K562 (cell line): ENCODE measurements at regions of chr10 and their contacts with region 1.

Region 1: GRCh38 chr10:72273410-72274212 is at the start of gene DDIT4:
- DNase-seq: peak; percentile 99 to 100 (median 100)
- ATAC-seq: peak; percentile 72
- H3K4me3 ChIP-seq: peak within 1 kb of the TSS; percentile 86
- H3K27ac ChIP-seq: peak within 1 kb of the TSS; percentile 91
- H3K4me1 ChIP-seq: peaks cover 34 to 44% of the 10 kb centered on the region in 2 experiments
- H3K27me3 ChIP-seq: no peaks in the 10 kb centered on the region
- CTCF ChIP-seq: no peak; a peak in 1 of 6 replicates
- EP300 ChIP-seq: peak; percentile 34
- POLR2A ChIP-seq: peak; percentile 99
- RAD21 ChIP-seq: peak; percentile 15 to 46
- polyA plus RNA-seq, gene DDIT4: 8.2 to 12.3 TPM

Region 2: GRCh38 chr10:72215652-72216549 is 57.7 kb before region 1 on chr10 and contains the starts of genes ANAPC16 and ASCC1:
- CTCF ChIA-PET with region 1: no interaction called
- POLR2A ChIA-PET with region 1: interaction called, 70 read pairs
- in situ Hi-C with region 1: no loop called
- intact Hi-C with region 1: loop called (anchors 2 kb)
- DNase-seq: peak; percentile 93 to 98 (median 97)
- ATAC-seq: peak; percentile 90
- H3K4me3 ChIP-seq: peak within 1 kb of the TSS; percentile 65
- H3K27ac ChIP-seq: peak within 1 kb of the TSS; percentile 99
- H3K4me1 ChIP-seq: peaks cover 13 to 19% of the 10 kb centered on the region in 2 experiments; a peak in 4 of 5 replicates
- H3K27me3 ChIP-seq: no peaks in the 10 kb centered on the region
- CTCF ChIP-seq: 0 out of 6 replicates have a peak, but pooled peaks of 1 of the 3 experiments have one; percentile 1
- EP300 ChIP-seq: peak; percentile 22; the same call in 1 of the 2 replicates
- POLR2A ChIP-seq: peak; percentile 100
- RAD21 ChIP-seq: peak; percentile 10 to 34; a peak in 1 of 4 replicates
- polyA plus RNA-seq, gene ANAPC16: 184 to 208 TPM
- polyA plus RNA-seq, gene ASCC1: 50.8 to 73.3 TPM

Region 3: DNA sequence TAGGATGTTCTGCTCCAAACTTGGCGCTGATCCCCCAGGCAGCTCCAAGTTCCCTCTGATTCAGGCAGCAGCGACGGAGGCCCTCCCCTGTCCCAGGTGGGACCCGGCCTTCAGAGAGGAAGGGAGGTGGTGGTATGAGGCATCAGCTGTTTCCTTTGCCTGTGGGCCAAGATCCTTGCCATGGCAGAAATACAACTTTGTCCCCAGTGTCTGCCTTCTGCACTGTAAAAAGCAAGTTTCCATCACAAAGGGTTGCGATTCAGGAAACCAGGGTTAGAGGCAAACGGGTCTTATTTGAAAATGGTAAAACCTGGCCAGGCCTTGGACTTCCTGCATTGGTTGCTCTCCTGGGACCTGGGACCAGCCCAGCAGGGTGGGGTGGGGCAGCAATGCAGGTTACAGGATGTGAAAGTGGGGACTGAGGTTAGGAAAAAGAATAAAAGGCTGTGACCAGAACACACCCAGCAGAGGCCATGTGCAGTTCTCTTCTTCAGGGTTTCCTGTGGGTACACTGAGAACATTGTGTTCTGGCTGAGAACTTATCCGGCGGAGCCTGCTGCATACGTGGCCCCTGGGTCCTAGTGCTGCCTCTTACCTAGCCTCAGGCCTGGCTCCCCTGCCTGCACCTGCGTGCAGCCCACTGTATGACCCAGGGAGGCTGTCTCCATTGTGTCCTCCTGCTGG is 25.0 kb before region 1 on chr10:
- CTCF ChIA-PET with region 1: no interaction called
- POLR2A ChIA-PET with region 1: interaction called, 277 read pairs
- in situ Hi-C with region 1: no loop called
- intact Hi-C with region 1: loop called (anchors 1 kb)
- DNase-seq: no peak
- ATAC-seq: peak; percentile 51
- H3K4me3 ChIP-seq: no peak overlapping the region
- H3K27ac ChIP-seq: no peak overlapping the region
- H3K4me1 ChIP-seq: peaks cover 34 to 50% of the 10 kb centered on the region in 2 experiments
- H3K27me3 ChIP-seq: no peaks in the 10 kb centered on the region
- CTCF ChIP-seq: no peak
- EP300 ChIP-seq: no peak
- POLR2A ChIP-seq: no peak
- RAD21 ChIP-seq: no peak

Region 4: DNA sequence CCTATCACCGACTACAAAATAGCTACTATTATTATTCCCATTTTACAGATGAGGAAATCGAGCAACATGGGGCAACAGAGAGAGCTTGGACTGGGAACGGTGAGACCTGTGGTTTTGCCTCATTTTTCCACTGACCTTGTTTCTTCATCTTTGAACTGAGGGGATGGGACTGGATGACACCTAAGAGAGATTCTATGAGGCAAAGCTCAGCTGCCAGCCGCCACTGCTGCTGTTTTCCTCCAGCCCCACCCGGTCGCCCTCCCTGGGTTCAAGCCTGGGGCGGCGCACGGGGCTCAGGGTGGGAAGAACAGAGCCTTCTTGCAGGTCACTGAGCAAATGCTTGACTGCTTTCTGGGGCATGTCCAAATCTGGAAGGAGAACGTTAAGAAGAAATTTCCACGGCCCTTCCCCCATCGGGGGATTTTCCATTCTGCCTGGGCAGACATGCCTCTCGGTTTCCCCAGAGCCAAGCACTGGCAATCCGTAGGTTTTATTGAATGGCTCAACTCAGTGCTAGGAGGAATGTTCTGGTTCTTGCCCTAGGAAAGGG is 12.4 kb after region 1 on chr10:
- CTCF ChIA-PET with region 1: no interaction called
- POLR2A ChIA-PET with region 1: interaction called, 155 read pairs
- in situ Hi-C with region 1: no loop called
- intact Hi-C with region 1: no loop called
- DNase-seq: peak in 2 of 4 experiments; percentile 6 to 14
- ATAC-seq: no peak; the same call in 1 of the 3 replicates
- H3K4me3 ChIP-seq: no peak overlapping the region
- H3K27ac ChIP-seq: no peak overlapping the region
- H3K4me1 ChIP-seq: peaks cover 12 to 24% of the 10 kb centered on the region in 2 experiments
- H3K27me3 ChIP-seq: no peaks in the 10 kb centered on the region
- CTCF ChIP-seq: no peak
- EP300 ChIP-seq: no peak
- POLR2A ChIP-seq: no peak
- RAD21 ChIP-seq: no peak

Region 5: DNA sequence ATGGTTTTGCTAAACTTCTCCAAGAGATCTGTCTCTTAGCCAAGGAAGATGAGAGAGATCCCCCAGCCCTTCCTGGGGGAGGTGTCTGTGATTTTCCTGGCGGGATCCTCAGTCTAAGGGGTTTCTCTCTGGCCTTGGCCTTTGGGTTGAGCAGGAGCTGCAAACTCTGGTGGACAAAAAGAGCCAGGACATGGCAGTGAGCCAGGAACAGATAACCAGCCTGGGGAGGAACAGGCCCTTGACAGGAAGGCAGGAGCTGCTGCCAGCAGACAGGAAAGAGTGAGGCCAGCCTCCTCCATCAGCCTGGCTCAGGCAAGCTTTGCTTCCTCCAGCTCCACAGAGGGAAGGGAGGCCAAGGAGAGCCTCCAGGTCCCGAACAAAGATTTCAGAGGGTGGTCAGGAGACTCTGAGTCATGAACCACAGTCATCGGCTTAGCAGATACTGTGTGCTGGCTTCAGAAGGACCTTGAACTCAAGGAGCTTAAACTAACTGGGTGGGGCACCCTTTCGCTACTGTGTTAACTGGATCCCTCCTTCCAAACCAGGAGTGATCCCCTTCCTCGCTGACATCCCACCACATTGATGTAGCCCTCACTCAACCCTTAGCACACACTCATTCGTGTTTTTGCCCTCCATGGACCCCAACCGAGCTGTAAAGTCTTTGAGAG is 34.8 kb after region 1 on chr10:
- CTCF ChIA-PET with region 1: no interaction called
- POLR2A ChIA-PET with region 1: interaction called, 113 read pairs
- in situ Hi-C with region 1: no loop called
- intact Hi-C with region 1: no loop called
- DNase-seq: peak; percentile 72 to 96 (median 79)
- ATAC-seq: peak; percentile 82
- H3K4me3 ChIP-seq: no peak overlapping the region
- H3K27ac ChIP-seq: peak overlapping the region; percentile 87
- H3K4me1 ChIP-seq: peaks cover 45 to 57% of the 10 kb centered on the region in 2 experiments
- H3K27me3 ChIP-seq: no peaks in the 10 kb centered on the region
- CTCF ChIP-seq: peak in 2 of 3 experiments; percentile 9 to 14; a peak in 2 of 6 replicates
- EP300 ChIP-seq: peak; percentile 78
- POLR2A ChIP-seq: peak; percentile 74
- RAD21 ChIP-seq: peak; percentile 33 to 50

Region 6: DNA sequence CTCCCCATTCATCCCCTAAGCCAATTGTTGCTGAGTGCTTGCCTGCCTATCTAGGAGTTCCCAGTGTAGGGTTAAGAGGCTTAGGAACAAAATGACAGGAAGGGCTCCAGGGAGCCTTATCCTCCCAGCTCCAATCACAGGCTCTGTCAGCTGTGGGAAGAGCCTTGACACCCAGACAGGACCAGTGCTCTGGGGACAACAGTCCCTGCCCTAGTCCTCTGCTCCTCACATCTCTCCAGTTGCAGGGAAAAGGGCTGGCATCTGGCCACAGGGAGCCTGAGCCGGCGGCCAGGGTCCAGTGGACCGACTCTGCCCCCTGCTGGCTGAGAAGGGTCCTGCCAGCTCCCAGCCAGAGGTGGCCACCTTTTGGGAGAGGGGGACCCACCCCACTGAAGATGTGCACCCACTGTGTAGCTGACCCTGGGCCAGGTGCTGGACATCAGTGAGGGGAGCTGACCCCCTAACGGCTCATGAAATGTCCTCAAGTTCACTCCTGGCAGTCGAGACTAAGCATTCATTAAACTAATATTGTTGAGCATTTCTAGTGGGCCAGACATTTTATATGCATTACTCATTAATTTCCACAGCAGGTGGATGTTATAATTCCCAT is 63.5 kb after region 1 on chr10:
- CTCF ChIA-PET with region 1: interaction called, 12 read pairs
- POLR2A ChIA-PET with region 1: interaction called, 197 read pairs
- in situ Hi-C with region 1: no loop called
- intact Hi-C with region 1: no loop called
- DNase-seq: peak; percentile 76 to 88 (median 81)
- ATAC-seq: peak; percentile 81
- H3K4me3 ChIP-seq: no peak overlapping the region
- H3K27ac ChIP-seq: no peak overlapping the region
- H3K4me1 ChIP-seq: peaks cover 2 to 36% of the 10 kb centered on the region in 2 experiments; a peak in 2 of 5 replicates
- H3K27me3 ChIP-seq: no peaks in the 10 kb centered on the region
- CTCF ChIP-seq: peak; percentile 91 to 99 (median 93)
- EP300 ChIP-seq: no peak
- POLR2A ChIP-seq: peak; percentile 29; the same call in 1 of the 2 replicates
- RAD21 ChIP-seq: peak; percentile 95 to 97

Region 7: DNA sequence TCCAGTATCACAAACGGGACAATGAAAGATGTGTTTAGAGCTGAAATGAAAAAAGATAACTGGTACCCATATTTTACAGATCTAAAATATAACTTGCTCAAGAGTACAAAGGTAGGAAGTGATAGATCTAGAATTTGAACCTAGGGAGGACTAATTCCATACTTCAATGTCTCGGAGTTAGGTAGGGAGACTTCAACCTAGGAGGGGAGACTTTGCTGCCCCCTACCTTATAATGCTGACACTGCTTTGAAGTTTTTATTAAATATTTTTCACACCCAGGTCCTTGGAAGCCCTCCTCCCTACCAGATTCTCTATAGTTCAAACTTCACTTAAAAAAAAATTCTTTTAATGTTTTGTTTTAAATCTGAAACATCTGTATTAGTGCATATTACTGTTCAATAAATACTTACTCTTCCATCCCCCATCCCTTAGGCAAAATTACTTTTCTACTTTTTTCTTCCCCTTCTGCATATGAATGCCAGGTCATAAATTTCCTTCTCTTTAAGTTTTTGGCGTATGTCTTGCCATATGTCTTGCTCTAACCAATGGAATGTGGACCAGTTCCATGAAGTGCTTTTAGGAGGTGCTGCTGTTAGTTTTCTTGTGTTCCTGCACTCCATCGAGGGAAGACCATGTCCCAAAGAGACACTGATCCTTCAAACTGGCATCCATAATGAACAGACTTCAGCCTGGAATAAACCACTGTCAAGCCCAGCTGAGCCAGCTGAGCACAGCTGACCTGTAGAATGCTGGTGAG is 294.5 kb after region 1 on chr10:
- CTCF ChIA-PET with region 1: no interaction called
- POLR2A ChIA-PET with region 1: no interaction called
- in situ Hi-C with region 1: no loop called
- intact Hi-C with region 1: no loop called
- DNase-seq: peak; percentile 41 to 64 (median 48)
- ATAC-seq: peak; percentile 95
- H3K4me3 ChIP-seq: no peak overlapping the region
- H3K27ac ChIP-seq: no peak overlapping the region
- H3K4me1 ChIP-seq: no peaks in the 10 kb centered on the region
- H3K27me3 ChIP-seq: no peaks in the 10 kb centered on the region
- CTCF ChIP-seq: peak; percentile 47 to 77 (median 67); a peak in 5 of 6 replicates
- EP300 ChIP-seq: no peak
- POLR2A ChIP-seq: no peak
- RAD21 ChIP-seq: peak; percentile 43 to 62; a peak in 3 of 4 replicates